HCT116 (cell line): ENCODE measurements at regions of chr1 and their contacts with region 1.

Region 1: GRCh38 chr1:203504397-203505250 is 10.7 kb downstream of the OPTC start:
- DNase-seq: peak; percentile 70
- ATAC-seq: peak; percentile 98
- H3K4me3 ChIP-seq: no peak overlapping the region
- H3K27ac ChIP-seq: no peak overlapping the region
- H3K4me1 ChIP-seq: peaks cover 0 to 7% of the 10 kb centered on the region in 2 experiments; a peak in 1 of 4 replicates
- H3K27me3 ChIP-seq: peaks cover 13% of the 10 kb centered on the region; the same call in 1 of the 2 replicates
- CTCF ChIP-seq: peak; percentile 70 to 85 (median 83)
- POLR2A ChIP-seq: no peak
- RAD21 ChIP-seq: peak; percentile 86

Region 2: GRCh38 chr1:203340112-203340804 is 164.4 kb before region 1 on chr1:
- CTCF ChIA-PET with region 1: interaction called, 17 read pairs
- POLR2A ChIA-PET with region 1: no interaction called
- RAD21 ChIA-PET with region 1: no interaction called
- intact Hi-C with region 1: loop called (anchors 5 kb)
- DNase-seq: peak; percentile 76
- ATAC-seq: peak; percentile 76
- H3K4me3 ChIP-seq: no peak overlapping the region
- H3K27ac ChIP-seq: no peak overlapping the region
- H3K4me1 ChIP-seq: peaks cover 0 to 6% of the 10 kb centered on the region in 2 experiments; a peak in 2 of 4 replicates
- H3K27me3 ChIP-seq: peaks cover 15% of the 10 kb centered on the region; the same call in 1 of the 2 replicates
- CTCF ChIP-seq: peak; percentile 88 to 96 (median 94)
- POLR2A ChIP-seq: no peak
- RAD21 ChIP-seq: peak; percentile 95

Region 3: GRCh38 chr1:203395751-203396150 is 108.9 kb before region 1 on chr1:
- CTCF ChIA-PET with region 1: no interaction called
- POLR2A ChIA-PET with region 1: no interaction called
- RAD21 ChIA-PET with region 1: no interaction called
- intact Hi-C with region 1: no loop called
- DNase-seq: no peak
- ATAC-seq: no peak
- H3K4me3 ChIP-seq: no peak overlapping the region
- H3K27ac ChIP-seq: no peak overlapping the region
- H3K4me1 ChIP-seq: no peaks in the 10 kb centered on the region
- H3K27me3 ChIP-seq: no peaks in the 10 kb centered on the region
- CTCF ChIP-seq: no peak
- POLR2A ChIP-seq: no peak
- RAD21 ChIP-seq: no peak

Region 4: DNA sequence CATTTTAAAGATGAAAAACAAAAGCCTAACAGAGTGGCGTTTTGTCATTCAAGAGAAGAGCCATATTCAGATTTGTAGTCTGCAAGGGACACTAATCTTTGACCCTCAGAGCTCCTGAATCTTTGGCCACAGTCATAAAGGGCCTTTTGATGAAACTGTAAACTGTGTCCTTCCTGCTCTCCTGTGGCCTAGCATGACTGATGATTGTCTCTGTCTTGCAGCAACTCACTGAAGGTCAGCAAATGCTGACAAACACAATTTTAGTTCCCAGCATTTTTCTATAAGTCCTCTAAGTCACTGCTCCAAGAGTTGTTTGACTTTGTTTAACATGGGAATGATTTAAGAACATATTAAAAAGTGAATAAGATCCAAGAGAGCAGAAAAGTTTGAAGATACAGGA is 84.4 kb before region 1 on chr1:
- CTCF ChIA-PET with region 1: no interaction called
- POLR2A ChIA-PET with region 1: no interaction called
- RAD21 ChIA-PET with region 1: no interaction called
- intact Hi-C with region 1: no loop called
- DNase-seq: no peak
- ATAC-seq: no peak
- H3K4me3 ChIP-seq: no peak overlapping the region
- H3K27ac ChIP-seq: no peak overlapping the region
- H3K4me1 ChIP-seq: no peaks in the 10 kb centered on the region
- H3K27me3 ChIP-seq: peaks cover 13% of the 10 kb centered on the region
- CTCF ChIP-seq: no peak
- POLR2A ChIP-seq: no peak
- RAD21 ChIP-seq: no peak

Region 5: DNA sequence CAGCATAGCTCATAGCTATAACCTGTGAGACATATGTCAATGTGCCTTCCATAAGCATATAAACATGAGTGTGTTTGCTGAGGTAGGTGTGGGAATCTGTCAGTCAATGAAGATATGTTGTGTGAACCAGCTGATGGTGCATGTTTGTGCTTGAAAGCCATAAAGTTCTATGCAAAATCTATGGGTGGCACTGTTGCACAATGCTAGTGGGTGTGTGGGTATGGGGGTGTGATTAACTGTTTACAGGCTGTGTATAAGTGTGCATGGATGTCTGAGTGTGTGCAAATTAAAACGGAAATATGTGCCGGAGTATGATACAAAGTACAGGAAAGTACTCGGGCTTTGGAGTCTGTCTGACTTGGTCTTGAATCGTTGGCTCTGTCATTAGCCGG is 121.0 kb after region 1 on chr1:
- CTCF ChIA-PET with region 1: interaction called, 13 read pairs
- POLR2A ChIA-PET with region 1: no interaction called
- RAD21 ChIA-PET with region 1: no interaction called
- intact Hi-C with region 1: no loop called
- DNase-seq: no peak
- ATAC-seq: peak; percentile 41
- H3K4me3 ChIP-seq: peak overlapping the region in 1 of 2 experiments; percentile 64; a peak in 2 of 4 replicates
- H3K27ac ChIP-seq: no peak overlapping the region
- H3K4me1 ChIP-seq: peaks cover 5 to 33% of the 10 kb centered on the region in 2 experiments; a peak in 3 of 4 replicates
- H3K27me3 ChIP-seq: no peaks in the 10 kb centered on the region
- CTCF ChIP-seq: peak in 2 of 3 experiments; percentile 37 to 61; a peak in 4 of 6 replicates
- POLR2A ChIP-seq: no peak
- RAD21 ChIP-seq: peak; percentile 88